ENCODE measurements at regions of chr6 and their contacts with region 1.

Region 1: GRCh38 chr6:47780510-47781356 is 1.1 kb upstream of the OPN5 start:
- DNase-seq: no peak
- ATAC-seq: peak; percentile 96
- H3K4me3 ChIP-seq: no peak overlapping the region
- H3K27ac ChIP-seq: no peak overlapping the region
- H3K4me1 ChIP-seq: no peaks in the 10 kb centered on the region
- H3K27me3 ChIP-seq: peaks cover 0 to 2% of the 10 kb centered on the region in 2 experiments; a peak in 2 of 4 replicates
- CTCF ChIP-seq: peak; percentile 60 to 65 (median 61)
- EP300 ChIP-seq: no peak
- POLR2A ChIP-seq: no peak
- RAD21 ChIP-seq: peak; percentile 86

Region 2: GRCh38 chr6:47551670-47552069 is 229.1 kb before region 1 on chr6:
- CTCF ChIA-PET with region 1: no interaction called
- POLR2A ChIA-PET with region 1: no interaction called
- RAD21 ChIA-PET with region 1: no interaction called
- SMC1A ChIA-PET with region 1: no interaction called
- in situ Hi-C with region 1: no loop called
- intact Hi-C with region 1: no loop called
- DNase-seq: no peak
- ATAC-seq: no peak
- H3K4me3 ChIP-seq: no peak overlapping the region
- H3K27ac ChIP-seq: no peak overlapping the region
- H3K4me1 ChIP-seq: no peaks in the 10 kb centered on the region
- H3K27me3 ChIP-seq: no peaks in the 10 kb centered on the region
- CTCF ChIP-seq: no peak
- EP300 ChIP-seq: no peak
- POLR2A ChIP-seq: no peak
- RAD21 ChIP-seq: no peak

Region 3: GRCh38 chr6:47810885-47811284 is 30.2 kb after region 1 on chr6:
- CTCF ChIA-PET with region 1: no interaction called
- POLR2A ChIA-PET with region 1: no interaction called
- RAD21 ChIA-PET with region 1: no interaction called
- SMC1A ChIA-PET with region 1: no interaction called
- in situ Hi-C with region 1: no loop called
- intact Hi-C with region 1: no loop called
- DNase-seq: no peak
- ATAC-seq: peak; percentile 45; the same call in 2 of the 3 replicates
- H3K4me3 ChIP-seq: no peak overlapping the region
- H3K27ac ChIP-seq: no peak overlapping the region
- H3K4me1 ChIP-seq: no peaks in the 10 kb centered on the region
- H3K27me3 ChIP-seq: no peaks in the 10 kb centered on the region; a peak in 1 of 4 replicates
- CTCF ChIP-seq: peak in 1 of 3 experiments; percentile 2; a peak in 1 of 6 replicates
- EP300 ChIP-seq: no peak
- POLR2A ChIP-seq: no peak
- RAD21 ChIP-seq: no peak

Region 4: GRCh38 chr6:48136856-48137255 is 356.1 kb after region 1 on chr6:
- CTCF ChIA-PET with region 1: no interaction called
- POLR2A ChIA-PET with region 1: no interaction called
- RAD21 ChIA-PET with region 1: no interaction called
- SMC1A ChIA-PET with region 1: no interaction called
- in situ Hi-C with region 1: no loop called
- intact Hi-C with region 1: no loop called
- DNase-seq: no peak
- ATAC-seq: no peak
- H3K4me3 ChIP-seq: no peak overlapping the region
- H3K27ac ChIP-seq: no peak overlapping the region
- H3K4me1 ChIP-seq: no peaks in the 10 kb centered on the region
- H3K27me3 ChIP-seq: no peaks in the 10 kb centered on the region
- CTCF ChIP-seq: no peak
- EP300 ChIP-seq: no peak
- POLR2A ChIP-seq: no peak
- RAD21 ChIP-seq: no peak

Region 5: DNA sequence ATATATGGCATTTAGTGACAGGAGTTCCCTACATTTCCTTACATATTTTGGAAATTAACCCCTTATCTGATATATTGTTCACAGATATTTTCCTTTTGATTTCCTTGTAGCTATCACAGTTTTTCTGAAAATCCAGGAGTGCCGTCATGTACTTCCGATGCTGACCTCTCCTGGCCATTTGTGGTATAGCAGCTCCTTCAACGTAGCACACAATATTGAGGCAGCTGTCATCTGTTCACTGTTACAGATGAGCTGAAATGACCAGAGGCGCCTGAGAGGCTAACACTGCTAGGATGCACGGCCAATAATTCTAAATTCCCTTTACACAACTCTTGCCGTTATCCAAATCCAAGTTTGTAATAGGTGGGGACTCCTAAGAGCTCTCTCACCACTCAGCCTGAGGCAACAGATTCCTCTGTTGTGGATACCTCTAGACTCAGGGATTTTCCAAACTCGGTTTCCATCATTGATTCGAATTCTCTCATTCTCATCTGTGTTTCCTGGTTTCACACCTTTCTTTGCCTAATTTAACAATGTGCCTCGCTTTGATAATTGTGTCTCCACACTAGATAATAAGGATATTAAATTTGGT is 1629.3 kb after region 1 on chr6:
- CTCF ChIA-PET with region 1: interaction called, 57 read pairs
- POLR2A ChIA-PET with region 1: no interaction called
- RAD21 ChIA-PET with region 1: no interaction called
- SMC1A ChIA-PET with region 1: no interaction called
- in situ Hi-C with region 1: loop called (anchors 5 kb)
- intact Hi-C with region 1: no loop called
- DNase-seq: peak; percentile 8
- ATAC-seq: peak; percentile 91
- H3K4me3 ChIP-seq: no peak overlapping the region
- H3K27ac ChIP-seq: no peak overlapping the region
- H3K4me1 ChIP-seq: no peaks in the 10 kb centered on the region
- H3K27me3 ChIP-seq: no peaks in the 10 kb centered on the region
- CTCF ChIP-seq: peak; percentile 68 to 85 (median 81)
- EP300 ChIP-seq: no peak
- POLR2A ChIP-seq: no peak
- RAD21 ChIP-seq: peak; percentile 59